Endothelial cell of umbilical vein (primary cell): ENCODE measurements at regions of chr9 and their contacts with region 1.

Region 1: GRCh38 chr9:36036780-36037548 is at the start of gene RECK:
- DNase-seq: peak; percentile 72
- H3K4me3 ChIP-seq: peak within 1 kb of the TSS; percentile 76 to 89 (median 81)
- H3K27ac ChIP-seq: peak within 1 kb of the TSS; percentile 72
- H3K4me1 ChIP-seq: peaks cover 34% of the 10 kb centered on the region
- H3K27me3 ChIP-seq: no peaks in the 10 kb centered on the region
- CTCF ChIP-seq: no peak
- POLR2A ChIP-seq: peak; percentile 77
- total RNA-seq, gene RECK: 14.1 and 14.5 TPM in 2 replicates

Region 2: GRCh38 chr9:36023260-36024048 is 13.5 kb before region 1 on chr9:
- CTCF ChIA-PET with region 1: interaction called, 10 read pairs
- POLR2A ChIA-PET with region 1: no interaction called
- dilution Hi-C with region 1: no loop called
- intact Hi-C with region 1: no loop called
- DNase-seq: peak; percentile 71
- H3K4me3 ChIP-seq: no peak overlapping the region
- H3K27ac ChIP-seq: no peak overlapping the region
- H3K4me1 ChIP-seq: no peaks in the 10 kb centered on the region
- H3K27me3 ChIP-seq: no peaks in the 10 kb centered on the region
- CTCF ChIP-seq: peak; percentile 71 to 79
- POLR2A ChIP-seq: no peak

Region 3: DNA sequence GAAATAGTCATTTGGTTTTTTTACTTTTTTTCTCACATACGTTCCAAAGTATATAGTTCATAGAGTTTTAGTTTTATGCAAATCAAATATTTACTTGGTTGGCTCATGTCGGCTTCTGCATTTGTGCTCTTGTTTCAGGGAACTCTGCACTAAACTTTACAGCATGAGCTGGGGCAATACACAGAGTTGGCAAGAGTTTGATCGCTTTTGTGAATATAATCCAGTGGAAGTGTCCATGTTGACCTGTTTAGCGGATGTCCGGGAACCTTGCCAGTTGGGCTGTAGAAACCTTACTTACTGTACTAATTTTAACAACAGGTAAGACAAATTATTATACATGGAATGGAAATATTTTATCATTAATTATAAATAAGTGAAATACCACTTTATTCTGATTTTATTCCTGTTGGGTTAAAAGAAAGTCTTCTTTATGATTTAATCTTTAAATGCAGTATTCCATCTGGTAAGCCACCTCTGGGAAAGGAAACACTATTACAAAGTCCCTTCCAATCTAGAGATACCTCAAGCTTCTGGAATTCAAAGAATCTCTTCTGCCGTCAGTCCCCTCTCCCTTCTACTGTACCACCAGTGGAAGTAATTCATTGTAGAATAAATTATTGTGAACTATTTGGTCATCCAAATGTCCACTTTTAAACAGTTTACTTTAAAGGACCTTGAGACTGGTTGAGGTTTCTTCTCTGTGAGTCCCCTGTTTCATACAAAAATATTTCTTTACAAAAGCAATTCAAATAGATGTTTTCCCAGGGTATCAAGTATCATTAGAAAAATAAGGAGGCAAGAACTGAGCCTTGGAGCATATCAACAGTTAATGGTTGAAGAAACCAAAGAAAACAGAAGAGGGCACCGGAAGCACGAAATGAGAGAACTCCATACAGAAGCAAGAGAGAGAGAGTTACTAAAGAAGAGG is 54.3 kb after region 1 on chr9:
- CTCF ChIA-PET with region 1: no interaction called
- POLR2A ChIA-PET with region 1: no interaction called
- dilution Hi-C with region 1: no loop called
- intact Hi-C with region 1: loop called (anchors 2 kb)
- DNase-seq: peak; percentile 83
- H3K4me3 ChIP-seq: peak overlapping the region in 1 of 3 experiments; percentile 35
- H3K27ac ChIP-seq: peak overlapping the region; percentile 85
- H3K4me1 ChIP-seq: peaks cover 18% of the 10 kb centered on the region
- H3K27me3 ChIP-seq: no peaks in the 10 kb centered on the region
- CTCF ChIP-seq: no peak
- POLR2A ChIP-seq: no peak